ENCODE measurements at regions of chr5 and their contacts with region 1.

Region 1: GRCh38 chr5:112848116-112848811 is 12.8 kb upstream of the SRP19 start:
- DNase-seq: peak; percentile 26
- H3K4me3 ChIP-seq: peak overlapping the region; percentile 18
- CTCF ChIP-seq: peak; percentile 65

Region 2: DNA sequence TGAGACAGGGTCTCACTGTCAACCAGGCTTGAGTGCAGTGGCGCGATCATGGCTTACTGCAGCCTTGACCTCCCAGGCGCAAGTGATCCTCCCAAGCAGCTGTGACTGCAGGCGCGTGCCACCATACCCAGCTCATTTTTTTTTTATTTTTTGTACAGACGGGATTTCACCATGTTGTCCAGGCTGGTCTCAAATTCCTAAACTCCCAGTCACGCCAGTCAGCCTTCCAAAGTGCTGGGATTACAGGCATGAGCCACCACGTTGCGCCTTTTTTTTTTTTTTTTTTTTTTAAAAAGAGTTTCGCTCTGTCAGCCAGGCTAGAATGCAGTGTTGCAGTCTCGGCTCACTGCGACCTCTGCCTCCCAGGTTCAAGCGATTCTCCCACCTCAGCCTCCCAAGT is 14.3 kb before region 1 on chr5:
- CTCF ChIA-PET with region 1: interaction called, 11 read pairs
- POLR2A ChIA-PET with region 1: no interaction called
- DNase-seq: no peak
- H3K4me3 ChIP-seq: no peak overlapping the region
- CTCF ChIP-seq: no peak

Region 3: DNA sequence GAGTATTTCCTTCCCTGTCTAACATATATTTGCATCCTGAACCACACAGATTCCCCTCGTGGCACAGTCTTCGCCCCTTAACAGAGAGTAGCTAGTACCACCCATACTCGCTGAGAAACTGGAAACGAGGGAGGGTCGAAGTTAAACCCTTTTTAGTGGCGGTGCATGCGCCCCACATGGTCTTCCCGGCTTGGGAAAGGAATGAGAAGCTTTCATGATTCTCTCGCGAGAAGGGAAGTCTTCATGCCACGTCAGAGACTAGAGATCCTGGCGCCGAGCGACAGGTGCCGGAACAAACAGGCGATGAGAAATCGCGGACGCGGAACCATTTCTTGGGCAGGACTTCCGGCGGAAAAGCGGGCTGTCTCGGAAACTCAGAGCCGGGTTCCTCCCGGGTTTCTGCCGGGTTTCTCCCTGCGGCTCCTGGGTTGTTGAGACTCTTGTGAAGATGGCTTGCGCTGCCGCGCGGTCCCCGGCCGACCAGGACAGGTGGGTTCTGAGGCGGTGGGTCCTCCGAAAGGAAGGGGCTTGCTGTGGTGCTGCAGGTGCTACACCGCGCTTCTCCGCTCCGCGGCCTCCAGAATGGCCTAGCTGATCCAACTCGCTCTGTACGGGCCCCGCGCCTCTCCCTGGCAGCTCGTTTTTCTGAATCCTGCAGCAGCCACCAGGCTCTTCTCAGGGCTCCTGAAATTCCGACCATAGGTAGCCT is 12.8 kb after region 1 on chr5 and contains the start of gene SRP19:
- CTCF ChIA-PET with region 1: interaction called, 26 read pairs
- POLR2A ChIA-PET with region 1: no interaction called
- DNase-seq: peak; percentile 89
- H3K4me3 ChIP-seq: peak within 1 kb of the TSS; percentile 98
- CTCF ChIP-seq: no peak

Measured in AG04449 (cell line).